PC-9 (cell line): ENCODE measurements at regions of chr20 and their contacts with region 1.

Region 1: DNA sequence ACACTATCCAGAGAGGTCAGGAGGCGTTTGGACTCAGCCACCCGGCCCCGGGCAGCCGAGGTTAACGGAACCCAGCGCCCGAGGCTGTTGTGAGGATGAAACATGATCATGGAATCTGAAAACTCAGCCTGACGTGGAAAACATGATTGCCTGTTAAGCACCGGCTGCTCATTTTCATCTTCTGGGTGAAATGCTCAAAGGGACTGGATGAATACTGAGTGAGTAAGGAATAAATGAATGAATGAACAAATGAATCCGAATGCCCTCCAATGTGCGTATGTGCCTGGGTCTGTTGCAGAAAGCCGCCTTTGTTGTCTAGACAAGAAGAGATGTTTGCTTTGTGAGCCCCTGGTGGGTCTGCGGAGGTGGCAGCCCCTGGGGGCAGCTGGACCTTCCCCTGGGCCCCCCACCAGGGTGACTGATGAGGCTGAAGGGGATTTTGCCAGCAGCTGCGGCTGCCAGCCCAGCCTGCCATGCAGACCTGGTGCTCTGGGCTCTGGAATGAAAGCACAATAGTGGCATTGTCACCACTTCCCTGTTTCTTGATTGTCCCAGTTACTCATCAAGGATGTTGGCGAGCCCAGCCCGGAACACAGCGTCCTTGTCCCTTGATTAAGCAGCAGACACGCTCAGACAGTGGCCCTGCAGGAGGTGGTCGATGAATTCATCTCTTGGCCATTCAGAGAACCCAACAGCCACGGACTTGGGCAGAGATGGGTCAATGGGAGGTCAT is 211.1 kb downstream of the ANKRD60 start:
- DNase-seq: peak; percentile 80 to 95
- H3K4me3 ChIP-seq: no peak overlapping the region; the same call in 1 of the 2 replicates
- H3K27ac ChIP-seq: peak overlapping the region; percentile 93
- H3K4me1 ChIP-seq: peaks cover 87% of the 10 kb centered on the region
- H3K27me3 ChIP-seq: no peaks in the 10 kb centered on the region
- CTCF ChIP-seq: no peak

Region 2: DNA sequence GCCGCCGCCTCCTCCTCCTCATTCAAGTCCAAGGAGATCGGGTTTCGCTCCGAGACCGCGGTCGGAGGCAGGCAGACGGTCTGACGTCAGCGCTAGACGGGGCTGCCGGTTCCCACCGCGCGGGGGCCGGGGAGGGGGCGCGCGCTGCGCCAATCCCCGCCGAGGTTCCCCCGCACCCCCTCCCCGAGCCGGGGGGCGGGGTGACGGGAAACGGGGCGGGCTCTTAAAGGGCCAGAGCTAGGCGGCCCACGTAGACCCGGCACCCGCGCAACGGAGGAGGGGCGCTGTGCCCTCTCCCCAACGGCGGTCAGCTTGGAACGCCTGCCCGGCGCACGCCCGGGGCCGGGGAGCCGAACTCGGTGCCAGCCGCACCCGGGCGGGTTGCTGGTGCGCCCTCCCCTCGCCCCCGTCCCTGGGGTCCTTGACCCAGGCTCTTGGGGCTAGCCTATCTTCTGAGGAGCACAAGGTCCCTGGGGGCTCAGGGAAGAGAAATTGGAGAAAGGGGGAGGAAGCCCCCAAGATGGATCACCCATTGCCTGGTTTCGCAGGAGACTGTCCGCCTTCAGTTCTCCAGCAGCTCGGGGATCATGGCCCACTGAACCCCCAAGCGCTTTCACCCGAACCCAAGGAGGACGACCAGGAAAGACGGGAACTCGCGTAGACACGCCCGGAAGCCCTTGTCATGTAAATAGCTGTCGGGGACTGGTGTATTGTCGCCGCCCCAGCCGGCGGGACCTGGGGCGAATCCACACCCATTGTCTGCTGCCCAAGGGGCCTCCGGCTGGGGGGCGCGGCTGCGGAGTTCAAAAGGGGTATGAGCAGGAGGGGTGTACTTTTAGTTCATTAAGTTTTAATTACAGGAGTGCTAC is 307.2 kb before region 1 on chr20 and contains the start of gene PMEPA1:
- CTCF ChIA-PET with region 1: no interaction called
- POLR2A ChIA-PET with region 1: no interaction called
- intact Hi-C with region 1: loop called (anchors 1 kb)
- DNase-seq: peak; percentile 92 to 99
- H3K4me3 ChIP-seq: peak within 1 kb of the TSS; percentile 98
- H3K27ac ChIP-seq: peak within 1 kb of the TSS; percentile 77
- H3K4me1 ChIP-seq: peaks cover 59% of the 10 kb centered on the region
- H3K27me3 ChIP-seq: no peaks in the 10 kb centered on the region
- CTCF ChIP-seq: no peak
- total RNA-seq, gene PMEPA1: 163 and 177 TPM in 2 replicates

Region 3: DNA sequence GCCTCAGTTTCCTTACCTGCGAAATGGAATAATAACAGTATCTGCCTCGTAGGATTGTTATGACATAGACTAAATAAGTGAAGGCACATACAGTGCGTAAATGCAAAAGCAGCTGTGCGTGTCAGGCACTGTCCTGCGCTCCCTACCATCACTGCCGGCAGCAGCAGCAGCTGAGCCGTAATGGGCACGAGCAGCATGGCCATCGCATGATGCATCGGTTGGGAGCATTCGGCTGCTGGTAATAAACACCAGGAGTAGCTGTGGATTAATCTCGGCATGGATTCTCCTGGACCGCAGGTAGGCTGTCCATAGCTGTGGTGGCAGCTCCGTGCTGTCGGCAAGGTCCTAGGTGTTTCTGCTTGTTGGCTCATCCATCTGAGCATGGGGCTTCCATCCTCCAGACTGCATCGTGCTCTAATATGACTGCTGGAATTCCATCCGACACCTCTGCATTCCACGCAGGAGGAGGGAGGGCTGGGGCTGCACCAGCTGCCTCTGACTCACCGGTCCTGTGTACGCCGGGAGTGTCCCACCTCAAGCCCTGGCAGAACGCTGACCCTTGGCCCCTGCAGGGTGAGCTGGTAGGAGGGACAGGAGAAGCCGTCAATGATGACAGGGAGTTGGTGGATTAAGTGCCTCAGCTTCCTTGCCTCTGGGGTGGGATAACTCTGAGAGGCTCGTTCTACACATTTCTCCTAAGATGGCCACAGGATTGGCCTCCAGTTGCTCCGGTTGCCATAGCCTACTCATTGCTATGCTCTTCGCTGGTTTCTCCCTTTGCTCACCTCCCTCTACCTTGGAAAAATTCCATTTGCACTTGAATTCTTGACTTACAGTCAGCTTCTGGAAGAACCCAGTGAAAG is 206.7 kb before region 1 on chr20:
- CTCF ChIA-PET with region 1: no interaction called
- POLR2A ChIA-PET with region 1: no interaction called
- intact Hi-C with region 1: loop called (anchors 2 kb)
- DNase-seq: peak; percentile 86 to 91
- H3K4me3 ChIP-seq: no peak overlapping the region
- H3K27ac ChIP-seq: peak overlapping the region; percentile 38; the same call in 1 of the 2 replicates
- H3K4me1 ChIP-seq: peaks cover 25% of the 10 kb centered on the region
- H3K27me3 ChIP-seq: no peaks in the 10 kb centered on the region
- CTCF ChIP-seq: no peak

Region 4: GRCh38 chr20:57991211-57991881 is 26.1 kb before region 1 on chr20:
- CTCF ChIA-PET with region 1: no interaction called
- POLR2A ChIA-PET with region 1: no interaction called
- intact Hi-C with region 1: loop called (anchors 1 kb)
- DNase-seq: peak; percentile 84 to 99
- H3K4me3 ChIP-seq: no peak overlapping the region
- H3K27ac ChIP-seq: peak overlapping the region; percentile 82
- H3K4me1 ChIP-seq: peaks cover 47% of the 10 kb centered on the region
- H3K27me3 ChIP-seq: no peaks in the 10 kb centered on the region
- CTCF ChIP-seq: no peak

Region 5: DNA sequence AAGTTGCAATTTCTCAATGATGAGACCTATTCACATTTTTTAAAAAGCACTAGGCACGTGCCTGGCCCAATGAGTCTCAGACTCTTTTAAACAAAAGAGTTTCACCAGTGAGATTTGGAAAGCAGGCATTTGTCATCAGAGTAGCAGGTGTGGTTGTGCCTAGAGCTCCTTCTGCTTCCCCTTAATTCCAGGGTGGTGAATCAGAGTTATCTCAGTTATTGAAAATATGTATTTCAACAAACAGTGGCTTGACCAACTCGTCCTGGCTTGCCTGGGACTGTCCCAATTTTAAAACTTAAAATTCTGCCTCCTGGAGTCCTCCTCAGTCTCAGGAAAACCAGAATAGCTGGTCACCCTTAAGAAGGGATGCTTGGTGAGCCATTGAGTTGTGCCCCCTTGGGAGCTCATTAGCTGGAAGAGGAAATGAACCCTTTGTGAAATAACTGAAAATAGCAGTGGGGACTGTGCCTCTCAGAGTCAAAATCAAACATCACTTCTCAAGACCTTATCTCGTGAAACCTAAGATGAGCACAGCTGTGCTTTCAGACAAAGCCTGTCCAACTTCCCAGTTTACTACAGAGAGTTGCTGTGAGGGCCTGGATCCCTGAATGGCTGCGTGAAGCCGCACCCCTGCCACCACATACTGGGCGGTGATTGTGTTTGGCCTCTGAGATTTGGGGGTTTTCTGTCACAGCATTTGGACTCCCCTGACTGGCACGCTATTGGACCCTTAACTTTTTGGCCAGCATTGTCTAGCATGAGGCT is 94.8 kb after region 1 on chr20:
- CTCF ChIA-PET with region 1: interaction called, 4 read pairs
- POLR2A ChIA-PET with region 1: no interaction called
- intact Hi-C with region 1: loop called (anchors 2 kb)
- DNase-seq: peak; percentile 72 to 98
- H3K4me3 ChIP-seq: no peak overlapping the region
- H3K27ac ChIP-seq: peak overlapping the region; percentile 86
- H3K4me1 ChIP-seq: peaks cover 59% of the 10 kb centered on the region
- H3K27me3 ChIP-seq: no peaks in the 10 kb centered on the region
- CTCF ChIP-seq: no peak